ENCODE measurements at regions of chr3 and their contacts with region 1.

Region 1: GRCh38 chr3:129316131-129317013 is 37.7 kb downstream of the HMCES start:
- DNase-seq: peak; percentile 98
- H3K4me3 Mint-ChIP-seq: peak overlapping the region; percentile 92
- H3K27ac Mint-ChIP-seq: peak overlapping the region; percentile 74
- H3K4me1 Mint-ChIP-seq: peaks cover 27% of the 10 kb centered on the region
- H3K27me3 Mint-ChIP-seq: no peaks in the 10 kb centered on the region

Region 2: DNA sequence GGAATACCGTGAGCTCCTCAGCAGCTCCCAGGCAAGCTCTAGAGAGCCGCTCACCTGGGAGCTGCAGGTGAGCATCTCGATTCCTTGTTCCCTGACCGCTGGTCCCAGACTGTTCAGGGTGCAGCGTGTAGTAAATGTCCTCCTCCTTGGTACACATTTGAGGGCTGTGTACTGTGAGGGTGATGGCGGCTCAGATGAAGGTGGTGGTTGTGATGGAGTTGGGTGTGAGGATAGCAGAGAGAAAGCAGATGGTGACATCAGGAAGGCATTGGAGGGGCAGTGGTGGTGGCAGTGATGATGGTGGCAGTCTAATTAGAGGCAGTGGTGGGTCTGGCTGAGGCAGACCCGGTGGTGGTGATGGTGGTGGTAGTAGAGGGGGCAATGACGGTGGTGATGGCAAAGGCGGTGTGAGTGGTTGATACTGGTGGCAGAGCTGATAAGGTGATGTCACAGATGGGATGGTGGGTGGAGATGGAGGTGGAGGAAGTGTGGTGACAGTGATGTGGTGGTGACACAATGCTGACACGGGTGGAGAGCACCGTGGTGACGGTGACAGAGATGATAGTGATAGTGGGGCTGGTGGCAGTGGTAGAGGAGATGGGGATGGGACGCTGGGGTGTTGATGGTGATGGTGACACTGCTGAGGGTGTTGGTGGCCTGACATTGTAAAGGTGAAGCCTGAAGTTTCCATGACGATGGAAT is 849.4 kb before region 1 on chr3 and contains the start of gene DNAJB8:
- intact Hi-C with region 1: loop called (anchors 5 kb)
- DNase-seq: peak; percentile 79
- H3K4me3 Mint-ChIP-seq: no peak within 1 kb of the TSS
- H3K27ac Mint-ChIP-seq: peak within 1 kb of the TSS; percentile 22
- H3K4me1 Mint-ChIP-seq: peaks cover 16% of the 10 kb centered on the region
- H3K27me3 Mint-ChIP-seq: peaks cover 21% of the 10 kb centered on the region
- total RNA-seq, gene DNAJB8: not detected in 2 replicates

Region 3: GRCh38 chr3:129305592-129306091 is 10.7 kb before region 1 on chr3:
- intact Hi-C with region 1: loop called (anchors 1 kb)
- DNase-seq: peak; percentile 73
- H3K4me3 Mint-ChIP-seq: peak overlapping the region; percentile 52
- H3K27ac Mint-ChIP-seq: peak overlapping the region; percentile 68
- H3K4me1 Mint-ChIP-seq: peaks cover 33% of the 10 kb centered on the region
- H3K27me3 Mint-ChIP-seq: no peaks in the 10 kb centered on the region

Region 4: DNA sequence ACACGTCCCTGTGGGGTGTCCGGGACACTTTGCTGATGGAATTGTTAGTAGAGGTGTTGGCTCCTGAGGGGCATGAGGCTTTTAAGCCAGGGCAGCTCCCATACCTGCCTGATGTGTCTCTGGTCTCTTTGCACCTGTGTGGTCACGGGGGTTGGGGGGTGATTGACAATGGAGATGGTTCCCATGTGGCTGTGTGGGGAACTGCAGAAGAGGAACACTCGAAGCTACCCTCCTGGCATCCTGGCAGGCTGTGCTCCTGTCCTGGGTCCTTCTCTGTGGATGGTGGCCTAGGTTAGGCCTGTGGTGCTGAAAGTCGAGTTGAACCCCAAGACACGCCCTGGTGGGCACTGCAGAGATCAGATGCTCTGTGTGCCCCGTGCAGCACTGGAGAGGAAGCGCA is 35.7 kb after region 1 on chr3:
- intact Hi-C with region 1: no loop called
- DNase-seq: no peak
- H3K4me3 Mint-ChIP-seq: no peak overlapping the region
- H3K27ac Mint-ChIP-seq: no peak overlapping the region
- H3K4me1 Mint-ChIP-seq: peaks cover 4% of the 10 kb centered on the region
- H3K27me3 Mint-ChIP-seq: peaks cover 3% of the 10 kb centered on the region

Region 5: GRCh38 chr3:129371041-129371826 is 54.9 kb after region 1 on chr3:
- intact Hi-C with region 1: no loop called
- DNase-seq: no peak
- H3K4me3 Mint-ChIP-seq: no peak overlapping the region
- H3K27ac Mint-ChIP-seq: no peak overlapping the region
- H3K4me1 Mint-ChIP-seq: no peaks in the 10 kb centered on the region
- H3K27me3 Mint-ChIP-seq: no peaks in the 10 kb centered on the region

Measured in activated CD4-positive, alpha-beta T cell treated with anti-CD3 and anti-CD28 coated beads, Interleukin-2, amount 10 ng/mL, durations not matched to agents 24 days and 14 days (primary cell).